ENCODE measurements at regions of chr4 and their contacts with region 1.

Region 1: GRCh38 chr4:40228497-40229365 is 31.9 kb downstream of the RHOH start:
- DNase-seq: no peak
- H3K4me3 Mint-ChIP-seq: peak overlapping the region; percentile 71
- H3K27ac Mint-ChIP-seq: peak overlapping the region; percentile 96
- H3K4me1 Mint-ChIP-seq: peaks cover 77% of the 10 kb centered on the region
- H3K27me3 Mint-ChIP-seq: no peaks in the 10 kb centered on the region

Region 2: GRCh38 chr4:40056716-40057585 is 171.8 kb before region 1 on chr4 and contains the start of gene N4BP2:
- intact Hi-C with region 1: loop called (anchors 1 kb)
- DNase-seq: peak; percentile 68
- H3K4me3 Mint-ChIP-seq: peak within 1 kb of the TSS; percentile 96
- H3K27ac Mint-ChIP-seq: peak within 1 kb of the TSS; percentile 99
- H3K4me1 Mint-ChIP-seq: peaks cover 25% of the 10 kb centered on the region
- H3K27me3 Mint-ChIP-seq: no peaks in the 10 kb centered on the region
- total RNA-seq, gene N4BP2: 23.2 and 23.8 TPM in 2 replicates

Region 3: DNA sequence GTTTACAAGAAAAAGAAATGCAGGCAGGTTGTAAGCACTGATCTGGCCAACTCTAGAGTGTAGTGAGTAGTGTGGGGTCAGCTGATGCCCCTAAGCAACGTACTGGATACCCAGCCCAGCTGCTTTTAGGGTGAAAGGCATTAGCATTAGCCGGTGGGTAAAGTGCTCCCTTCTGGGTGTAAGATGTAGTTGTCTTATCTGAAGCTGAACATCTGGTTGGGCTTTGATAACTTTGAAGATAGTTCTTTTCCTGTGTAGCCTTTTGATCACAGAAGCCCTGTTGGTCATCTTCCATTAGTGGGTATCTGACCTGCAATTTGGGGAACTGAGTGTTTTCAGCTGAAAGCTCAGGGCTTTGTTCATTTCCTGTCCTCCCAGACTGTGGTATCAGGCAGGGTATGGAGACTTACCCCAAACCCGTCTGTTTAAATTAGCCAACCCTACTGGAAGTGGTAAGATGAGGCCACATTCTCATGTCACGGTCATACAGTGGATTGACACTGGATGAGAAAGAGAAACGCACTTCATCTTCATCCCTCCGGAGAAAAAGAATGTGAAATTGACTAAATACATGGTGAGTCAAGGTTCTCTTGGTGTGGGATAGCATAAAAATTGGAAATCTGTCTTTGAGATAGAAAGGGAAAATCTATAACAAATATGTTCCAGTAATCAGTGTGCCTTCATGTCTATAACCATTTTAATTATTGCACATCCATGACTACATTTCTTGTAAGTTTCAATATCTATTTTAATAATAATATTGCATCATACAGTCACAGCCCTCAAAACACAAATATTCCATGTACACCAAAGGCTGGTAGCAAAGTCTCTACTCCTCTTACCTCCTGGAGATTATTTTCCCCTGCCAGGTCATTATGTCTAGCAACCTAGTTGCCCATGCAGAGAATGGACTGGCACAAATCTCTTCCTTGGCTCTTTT is 23.2 kb before region 1 on chr4:
- intact Hi-C with region 1: loop called (anchors 1 kb)
- DNase-seq: peak; percentile 47
- H3K4me3 Mint-ChIP-seq: peak overlapping the region; percentile 90
- H3K27ac Mint-ChIP-seq: peak overlapping the region; percentile 94
- H3K4me1 Mint-ChIP-seq: peaks cover 72% of the 10 kb centered on the region
- H3K27me3 Mint-ChIP-seq: no peaks in the 10 kb centered on the region

Region 4: DNA sequence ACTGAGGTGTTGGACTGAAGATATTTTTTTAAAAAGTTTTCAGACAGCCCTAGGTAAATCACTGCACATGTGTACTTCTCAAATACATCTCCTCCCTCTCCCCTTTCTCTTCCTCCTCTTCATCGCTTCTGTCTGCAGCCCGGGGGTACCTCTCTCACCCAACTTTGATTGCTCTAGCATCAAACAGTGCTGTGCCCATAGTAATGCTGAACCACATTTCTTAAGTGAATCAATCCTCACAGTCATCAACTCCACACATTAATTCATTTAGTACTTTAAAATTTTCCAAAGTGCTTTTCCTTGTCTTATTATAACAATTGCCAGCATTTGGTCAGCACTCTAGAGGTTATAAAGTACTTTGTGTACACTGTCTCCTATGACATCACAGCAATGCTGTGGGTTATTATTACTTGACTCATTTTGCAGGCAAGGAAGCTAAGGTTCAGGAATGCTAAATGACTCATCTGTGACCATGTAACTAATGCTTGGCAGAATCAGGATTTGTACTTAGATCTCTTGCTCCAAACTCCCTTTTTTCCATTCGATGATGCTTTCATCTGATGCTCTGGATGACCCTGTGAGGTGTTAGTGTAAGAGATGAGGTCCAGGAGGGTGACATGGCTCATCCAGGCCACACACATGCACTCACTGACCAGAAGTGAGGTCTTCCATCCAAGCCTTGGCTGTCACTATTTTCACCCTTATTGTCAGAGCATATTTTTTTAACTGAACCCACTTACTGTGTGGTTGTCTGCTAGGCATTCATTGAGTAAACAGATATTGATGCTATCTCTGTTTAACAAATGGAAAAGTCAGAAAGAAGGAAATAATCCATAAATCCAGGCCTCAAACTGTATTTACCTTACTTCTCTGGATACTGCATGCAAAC is 26.9 kb after region 1 on chr4:
- intact Hi-C with region 1: loop called (anchors 1 kb)
- DNase-seq: no peak
- H3K4me3 Mint-ChIP-seq: peak overlapping the region; percentile 15
- H3K27ac Mint-ChIP-seq: peak overlapping the region; percentile 85
- H3K4me1 Mint-ChIP-seq: peaks cover 52% of the 10 kb centered on the region
- H3K27me3 Mint-ChIP-seq: no peaks in the 10 kb centered on the region

Region 5: GRCh38 chr4:40309250-40309774 is 80.6 kb after region 1 on chr4:
- intact Hi-C with region 1: loop called (anchors 1 kb)
- DNase-seq: peak; percentile 82
- H3K4me3 Mint-ChIP-seq: peak overlapping the region; percentile 45
- H3K27ac Mint-ChIP-seq: peak overlapping the region; percentile 95
- H3K4me1 Mint-ChIP-seq: peaks cover 80% of the 10 kb centered on the region
- H3K27me3 Mint-ChIP-seq: no peaks in the 10 kb centered on the region

Region 6: GRCh38 chr4:40462326-40462725 is 233.6 kb after region 1 on chr4:
- intact Hi-C with region 1: no loop called
- DNase-seq: no peak
- H3K4me3 Mint-ChIP-seq: no peak overlapping the region
- H3K27ac Mint-ChIP-seq: peak overlapping the region; percentile 17
- H3K4me1 Mint-ChIP-seq: peaks cover 32% of the 10 kb centered on the region
- H3K27me3 Mint-ChIP-seq: no peaks in the 10 kb centered on the region

Region 7: DNA sequence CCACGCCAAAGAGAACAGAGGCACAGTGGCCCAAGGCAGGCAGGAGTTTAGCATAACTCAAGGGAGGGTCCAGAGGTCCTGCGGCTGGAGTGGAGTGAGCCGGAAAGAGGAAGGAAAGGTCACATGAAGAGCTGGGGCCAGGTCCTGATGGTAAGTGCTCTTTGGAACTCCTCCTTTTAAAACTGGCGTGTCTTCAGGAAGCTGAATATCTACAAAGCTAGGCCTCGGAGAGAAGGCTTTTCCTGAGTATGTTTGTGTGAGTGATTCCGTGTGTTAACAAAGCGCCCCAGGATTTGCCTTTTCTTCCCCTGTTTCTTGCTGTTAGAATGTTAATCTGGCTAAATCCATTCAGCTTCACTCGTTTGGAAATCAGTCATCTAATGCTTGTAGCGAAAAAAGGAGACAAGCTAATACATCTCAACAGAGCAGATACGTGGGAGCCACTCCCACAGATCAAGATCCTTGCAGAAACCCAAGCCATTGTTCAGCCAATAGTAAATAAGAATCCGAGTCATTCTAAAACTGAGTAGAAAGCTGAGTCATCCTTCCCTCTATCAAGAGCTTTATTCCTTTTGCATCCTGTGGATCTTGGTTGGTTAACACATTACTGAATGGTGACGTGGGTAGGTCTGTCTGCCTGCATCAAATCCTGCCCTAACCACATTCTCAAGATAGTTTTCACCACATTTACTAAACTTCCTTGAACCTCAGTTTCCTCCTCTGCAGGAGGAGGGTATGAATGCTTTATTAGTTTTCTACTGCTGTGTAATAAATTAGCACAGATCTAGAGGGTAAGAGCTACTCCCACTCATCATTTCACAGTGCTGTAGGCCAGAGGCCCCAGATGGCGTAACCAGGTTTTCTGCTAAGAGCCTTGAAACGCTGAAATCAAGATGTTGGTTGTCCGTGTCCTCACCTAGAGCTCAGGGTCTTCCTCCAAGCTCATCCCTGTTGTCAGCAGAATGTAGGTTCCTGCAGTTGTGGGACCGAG is 444.1 kb after region 1 on chr4:
- intact Hi-C with region 1: loop called (anchors 2 kb)
- DNase-seq: peak; percentile 63
- H3K4me3 Mint-ChIP-seq: peak overlapping the region; percentile 51
- H3K27ac Mint-ChIP-seq: peak overlapping the region; percentile 90
- H3K4me1 Mint-ChIP-seq: peaks cover 53% of the 10 kb centered on the region
- H3K27me3 Mint-ChIP-seq: no peaks in the 10 kb centered on the region